ENCODE measurements at regions of chr9 and their contacts with region 1.

Region 1: DNA sequence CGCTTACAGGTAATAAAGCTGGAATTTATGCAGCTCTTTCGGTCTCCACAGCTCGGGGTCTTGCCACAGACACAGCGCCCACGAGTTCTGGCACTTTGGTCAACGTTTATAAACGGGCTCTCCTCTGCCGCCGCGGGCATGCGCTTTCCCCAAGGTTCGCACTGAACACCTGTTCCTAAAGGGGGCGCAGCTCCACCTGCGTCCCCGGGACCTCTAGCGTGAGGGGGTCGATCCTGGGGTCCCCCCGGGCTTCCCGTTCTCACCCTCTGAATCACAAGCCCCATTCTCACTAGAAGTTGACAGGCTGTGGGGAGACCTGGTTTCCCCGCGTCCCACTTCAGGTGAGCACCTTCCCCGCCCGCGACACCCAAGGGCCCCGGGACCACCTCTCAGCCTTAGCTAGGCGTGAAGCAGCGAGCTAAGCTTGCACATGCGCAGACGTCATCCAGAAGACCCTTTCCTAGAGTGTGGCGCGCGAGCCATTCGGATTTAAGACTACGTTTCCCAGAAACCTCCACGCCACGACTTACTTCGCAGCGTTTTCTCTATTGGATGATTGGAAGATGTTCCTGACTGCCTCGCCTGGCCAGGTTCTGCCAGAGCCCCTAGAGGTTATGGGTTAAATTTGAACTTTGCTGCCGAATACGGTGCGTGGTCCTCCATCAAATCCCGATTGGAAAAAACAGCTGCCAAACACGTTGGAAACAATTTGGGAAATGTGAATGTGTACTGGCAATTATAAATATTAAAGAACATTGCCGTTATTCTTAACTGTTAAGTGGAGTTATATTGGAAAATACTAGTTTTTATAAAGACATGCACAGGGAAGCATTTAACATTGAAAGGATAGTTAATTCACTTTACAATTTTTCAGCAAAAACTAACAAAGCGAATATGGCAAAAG is 21.4 kb upstream of the ZNF782 start:
- DNase-seq: peak; percentile 88
- H3K4me3 ChIP-seq: peak overlapping the region; percentile 64 to 76
- H3K27ac ChIP-seq: peak overlapping the region in 1 of 2 experiments; percentile 22; a peak in 1 of 4 replicates
- H3K4me1 ChIP-seq: peaks cover 0 to 4% of the 10 kb centered on the region in 2 experiments; a peak in 1 of 4 replicates
- H3K27me3 ChIP-seq: no peaks in the 10 kb centered on the region
- CTCF ChIP-seq: peak; percentile 35
- EP300 ChIP-seq: no peak
- RAD21 ChIP-seq: peak; percentile 24; the same call in 1 of the 2 replicates

Region 2: DNA sequence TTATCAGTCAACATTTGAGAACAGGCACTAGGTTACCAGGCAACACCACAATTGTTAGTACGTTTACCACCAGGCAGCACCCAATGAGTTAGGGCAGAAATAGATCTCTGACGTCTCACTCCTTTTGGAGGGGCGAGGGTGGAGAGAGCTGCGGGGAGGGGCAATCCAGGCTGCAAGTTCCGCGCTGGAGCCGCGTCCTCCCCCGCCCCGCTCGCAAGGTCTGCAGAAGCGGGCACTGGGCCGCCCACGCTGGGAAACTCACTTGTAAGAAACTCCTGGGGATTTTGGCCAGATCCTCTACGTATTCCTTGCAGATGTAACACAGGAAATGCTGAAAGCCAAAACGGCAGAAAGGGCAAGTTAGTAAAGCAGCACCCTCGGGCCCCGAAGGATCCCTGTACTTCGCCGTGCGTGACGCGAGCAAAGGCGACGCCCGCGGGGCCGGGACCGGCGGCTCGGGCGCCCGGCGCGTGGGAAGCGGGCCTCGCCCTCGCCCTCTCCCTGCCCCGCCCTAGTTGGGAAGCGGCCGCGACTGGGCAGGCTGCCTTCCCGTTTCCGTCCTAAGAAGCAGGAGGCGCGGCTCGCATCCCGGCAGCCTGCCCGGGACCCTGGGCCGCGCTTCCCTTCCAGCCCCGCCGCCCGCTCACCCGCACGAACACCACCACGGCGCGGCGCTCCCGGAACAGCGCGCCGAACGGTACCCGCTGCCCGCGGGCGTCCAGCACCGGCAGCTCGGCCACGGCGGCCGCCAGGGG is 221.1 kb before region 1 on chr9:
- CTCF ChIA-PET with region 1: no interaction called
- POLR2A ChIA-PET with region 1: no interaction called
- DNase-seq: peak; percentile 88
- H3K4me3 ChIP-seq: peak overlapping the region; percentile 67 to 74
- H3K27ac ChIP-seq: peak overlapping the region; percentile 81 to 96
- H3K4me1 ChIP-seq: peaks cover 0 to 3% of the 10 kb centered on the region in 2 experiments; a peak in 1 of 4 replicates
- H3K27me3 ChIP-seq: no peaks in the 10 kb centered on the region
- CTCF ChIP-seq: no peak
- EP300 ChIP-seq: no peak
- RAD21 ChIP-seq: no peak

Region 3: GRCh38 chr9:96859461-96860198 is 16.1 kb before region 1 on chr9:
- CTCF ChIA-PET with region 1: interaction called, 44 read pairs
- POLR2A ChIA-PET with region 1: no interaction called
- DNase-seq: peak; percentile 47
- H3K4me3 ChIP-seq: no peak overlapping the region
- H3K27ac ChIP-seq: peak overlapping the region in 1 of 2 experiments; percentile 5; a peak in 1 of 4 replicates
- H3K4me1 ChIP-seq: peaks cover 13 to 15% of the 10 kb centered on the region in 2 experiments; a peak in 3 of 4 replicates
- H3K27me3 ChIP-seq: no peaks in the 10 kb centered on the region
- CTCF ChIP-seq: no peak
- EP300 ChIP-seq: no peak
- RAD21 ChIP-seq: no peak